ENCODE measurements at regions of chr7 and their contacts with region 1.

Region 1: GRCh38 chr7:77759294-77759889 is 38.8 kb downstream of the TMEM60 start:
- DNase-seq: peak; percentile 21 to 71
- ATAC-seq: peak; percentile 75 to 86; a peak in 5 of 6 replicates
- H3K4me3 ChIP-seq: no peak overlapping the region
- H3K27ac ChIP-seq: peak overlapping the region in 1 of 2 experiments; percentile 31; a peak in 1 of 6 replicates
- H3K4me1 ChIP-seq: peaks cover 46% of the 10 kb centered on the region
- CTCF ChIP-seq: peak; percentile 91
- EP300 ChIP-seq: no peak
- POLR2A ChIP-seq: no peak
- RAD21 ChIP-seq: peak; percentile 89

Region 2: DNA sequence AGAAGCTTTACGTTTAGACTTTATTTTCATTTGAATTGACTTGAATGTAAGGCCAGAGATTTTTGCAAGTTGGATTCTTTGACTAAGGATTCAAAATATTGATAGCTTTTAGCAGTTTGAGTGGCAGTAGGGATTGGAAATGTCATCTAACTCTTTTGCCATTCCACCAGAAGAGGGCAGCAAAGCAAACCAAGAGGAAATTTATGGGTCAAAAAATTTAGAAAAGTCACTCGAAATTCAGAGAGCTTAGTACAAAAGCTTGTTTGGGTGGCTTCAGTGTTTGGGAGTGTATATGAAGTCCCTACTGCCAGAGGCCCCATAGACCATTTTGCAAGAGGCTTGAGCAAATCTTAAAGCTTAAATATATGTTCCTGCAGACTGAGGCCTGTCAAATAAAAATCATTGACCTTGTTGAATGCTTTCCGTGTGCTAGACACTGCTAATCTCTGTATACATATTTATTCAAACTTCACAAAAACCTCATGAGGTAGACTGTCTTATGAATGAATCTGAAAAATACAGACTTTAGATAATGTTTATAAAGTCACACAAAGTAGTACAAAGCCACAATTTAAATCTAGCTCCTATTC is 107.7 kb before region 1 on chr7:
- CTCF ChIA-PET with region 1: interaction called, 32 read pairs
- POLR2A ChIA-PET with region 1: no interaction called
- DNase-seq: peak; percentile 32 to 43
- ATAC-seq: peak in 1 of 2 experiments; percentile 45; a peak in 2 of 6 replicates
- H3K4me3 ChIP-seq: no peak overlapping the region
- H3K27ac ChIP-seq: peak overlapping the region; percentile 15 to 23; a peak in 2 of 6 replicates
- H3K4me1 ChIP-seq: peaks cover 30% of the 10 kb centered on the region
- CTCF ChIP-seq: peak; percentile 76
- EP300 ChIP-seq: no peak
- POLR2A ChIP-seq: no peak
- RAD21 ChIP-seq: peak; percentile 54 to 57

Region 3: DNA sequence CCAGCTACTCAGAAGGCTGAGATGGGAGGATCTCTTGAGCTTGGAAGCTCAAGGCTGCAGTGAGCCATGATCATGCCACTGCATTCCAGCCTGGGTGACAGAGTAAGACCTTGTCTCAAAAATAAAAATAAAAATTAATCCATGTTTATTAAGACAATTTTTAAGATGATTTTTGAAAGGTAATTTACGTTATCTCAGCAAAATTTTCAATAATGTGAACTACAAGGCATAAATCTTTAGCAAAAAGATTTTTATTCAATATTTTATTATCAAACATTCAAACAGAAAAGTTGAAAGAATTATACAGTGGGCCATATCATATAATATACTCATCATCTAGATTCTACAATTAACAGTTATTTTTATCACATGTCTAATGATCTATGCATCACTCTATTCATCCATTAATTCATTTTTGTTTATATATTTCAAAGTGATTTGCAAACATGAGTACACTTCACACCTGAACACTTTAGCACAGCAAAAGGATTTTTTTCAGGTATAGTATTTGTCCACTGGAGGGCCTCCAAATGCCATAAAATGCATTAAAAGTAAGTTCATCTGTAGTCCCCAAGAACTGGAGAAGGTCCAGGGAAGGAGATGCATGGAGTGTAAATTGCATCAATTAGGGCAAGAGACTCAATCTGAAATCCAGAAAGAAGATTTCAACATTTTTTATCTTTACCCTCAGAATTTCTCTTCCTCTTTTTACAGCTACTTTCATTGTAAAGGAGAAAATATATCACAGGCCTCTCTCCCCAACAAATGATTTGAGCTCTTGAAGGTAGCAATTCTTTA is 101.8 kb before region 1 on chr7:
- CTCF ChIA-PET with region 1: interaction called, 32 read pairs
- POLR2A ChIA-PET with region 1: no interaction called
- DNase-seq: peak; percentile 32 to 46
- ATAC-seq: peak; percentile 59 to 77; a peak in 4 of 6 replicates
- H3K4me3 ChIP-seq: no peak overlapping the region
- H3K27ac ChIP-seq: no peak overlapping the region
- H3K4me1 ChIP-seq: no peaks in the 10 kb centered on the region
- CTCF ChIP-seq: peak; percentile 76
- EP300 ChIP-seq: no peak
- POLR2A ChIP-seq: no peak
- RAD21 ChIP-seq: peak; percentile 78 to 81

Region 4: GRCh38 chr7:77696198-77697028 is 63.0 kb before region 1 on chr7 and contains the start of gene RSBN1L:
- CTCF ChIA-PET with region 1: interaction called, 12 read pairs
- POLR2A ChIA-PET with region 1: no interaction called
- DNase-seq: peak; percentile 89 to 96
- ATAC-seq: peak; percentile 98
- H3K4me3 ChIP-seq: peak within 1 kb of the TSS; percentile 88
- H3K27ac ChIP-seq: peak within 1 kb of the TSS; percentile 93
- H3K4me1 ChIP-seq: peaks cover 16% of the 10 kb centered on the region; the same call in 2 of the 3 replicates
- CTCF ChIP-seq: no peak
- EP300 ChIP-seq: no peak
- POLR2A ChIP-seq: peak; percentile 62
- RAD21 ChIP-seq: no peak
- polyA plus RNA-seq, gene RSBN1L: 10.5 and 13.0 TPM in 2 replicates

Region 5: DNA sequence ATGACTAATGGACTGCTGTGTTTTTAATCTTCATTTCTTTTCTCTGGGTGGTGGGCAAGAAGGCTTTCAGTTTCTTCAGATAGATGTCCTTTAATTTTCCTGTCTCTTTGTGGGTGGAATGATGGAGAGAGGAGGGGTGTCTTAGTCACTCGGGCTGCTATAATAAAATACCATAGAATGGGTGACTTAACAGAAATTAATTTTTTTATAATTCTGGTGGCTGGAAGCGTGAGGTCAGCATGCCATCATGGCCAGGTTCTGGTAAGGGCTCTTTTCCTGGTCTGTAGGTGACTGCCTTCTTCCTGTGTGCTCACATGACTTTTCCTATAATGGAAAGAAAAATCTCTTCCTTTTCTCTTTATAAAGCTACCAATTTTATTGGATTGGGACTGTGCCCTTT is 56.9 kb before region 1 on chr7:
- CTCF ChIA-PET with region 1: interaction called, 12 read pairs
- POLR2A ChIA-PET with region 1: no interaction called
- DNase-seq: no peak
- ATAC-seq: no peak
- H3K4me3 ChIP-seq: no peak overlapping the region
- H3K27ac ChIP-seq: no peak overlapping the region
- H3K4me1 ChIP-seq: peaks cover 24% of the 10 kb centered on the region
- CTCF ChIP-seq: no peak
- EP300 ChIP-seq: no peak
- POLR2A ChIP-seq: no peak
- RAD21 ChIP-seq: no peak

Region 6: DNA sequence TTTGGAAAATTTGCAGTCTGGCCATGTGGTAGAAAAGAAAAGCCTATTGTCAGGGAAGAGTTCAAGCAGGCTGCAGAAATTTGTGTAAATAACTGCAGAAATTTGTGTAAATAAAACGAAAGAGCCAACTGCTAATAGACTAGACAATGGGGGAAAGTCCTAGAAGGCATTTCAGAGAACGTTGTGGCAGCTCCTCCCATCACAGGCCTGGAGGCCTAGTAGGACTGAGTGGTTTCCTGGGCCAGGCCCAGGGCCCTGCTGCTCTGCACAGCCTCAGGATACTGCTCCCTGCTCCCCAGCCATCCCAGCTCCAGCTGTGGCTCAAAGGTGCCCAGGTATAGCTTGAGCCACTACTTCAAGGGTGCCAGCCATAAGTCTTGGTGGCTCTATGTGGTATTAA is 12.2 kb before region 1 on chr7:
- CTCF ChIA-PET with region 1: interaction called, 14 read pairs
- POLR2A ChIA-PET with region 1: no interaction called
- DNase-seq: no peak
- ATAC-seq: peak in 1 of 2 experiments; percentile 42; a peak in 2 of 6 replicates
- H3K4me3 ChIP-seq: no peak overlapping the region
- H3K27ac ChIP-seq: no peak overlapping the region
- H3K4me1 ChIP-seq: peaks cover 9% of the 10 kb centered on the region; the same call in 2 of the 3 replicates
- CTCF ChIP-seq: no peak
- EP300 ChIP-seq: no peak
- POLR2A ChIP-seq: no peak
- RAD21 ChIP-seq: no peak

Region 7: GRCh38 chr7:77771901-77772300 is 12.5 kb after region 1 on chr7:
- CTCF ChIA-PET with region 1: interaction called, 10 read pairs
- POLR2A ChIA-PET with region 1: no interaction called
- DNase-seq: no peak
- ATAC-seq: no peak
- H3K4me3 ChIP-seq: no peak overlapping the region
- H3K27ac ChIP-seq: no peak overlapping the region
- H3K4me1 ChIP-seq: peaks cover 11% of the 10 kb centered on the region
- CTCF ChIP-seq: no peak
- EP300 ChIP-seq: no peak
- POLR2A ChIP-seq: no peak
- RAD21 ChIP-seq: no peak